ENCODE measurements at regions of chr7 and their contacts with region 1.

Region 1: GRCh38 chr7:121395961-121396757 is at the start of gene FAM3C:
- DNase-seq: peak; percentile 83
- H3K4me3 Mint-ChIP-seq: peak within 1 kb of the TSS; percentile 82
- H3K27ac Mint-ChIP-seq: peak within 1 kb of the TSS; percentile 77
- H3K4me1 Mint-ChIP-seq: peaks cover 42% of the 10 kb centered on the region
- H3K27me3 Mint-ChIP-seq: no peaks in the 10 kb centered on the region
- total RNA-seq, gene FAM3C: 40.7 to 41.0 TPM

Region 2: GRCh38 chr7:121273467-121274167 is 122.5 kb before region 1 on chr7:
- CTCF ChIA-PET with region 1: no interaction called
- POLR2A ChIA-PET with region 1: no interaction called
- DNase-seq: no peak
- H3K4me3 Mint-ChIP-seq: no peak overlapping the region
- H3K27ac Mint-ChIP-seq: no peak overlapping the region
- H3K4me1 Mint-ChIP-seq: peaks cover 2% of the 10 kb centered on the region
- H3K27me3 Mint-ChIP-seq: peaks cover 33% of the 10 kb centered on the region

Region 3: GRCh38 chr7:121302214-121302745 is 93.9 kb before region 1 on chr7:
- CTCF ChIA-PET with region 1: no interaction called
- POLR2A ChIA-PET with region 1: no interaction called
- DNase-seq: no peak
- H3K4me3 Mint-ChIP-seq: no peak overlapping the region
- H3K27ac Mint-ChIP-seq: no peak overlapping the region
- H3K4me1 Mint-ChIP-seq: no peaks in the 10 kb centered on the region
- H3K27me3 Mint-ChIP-seq: peaks cover 11% of the 10 kb centered on the region

Region 4: DNA sequence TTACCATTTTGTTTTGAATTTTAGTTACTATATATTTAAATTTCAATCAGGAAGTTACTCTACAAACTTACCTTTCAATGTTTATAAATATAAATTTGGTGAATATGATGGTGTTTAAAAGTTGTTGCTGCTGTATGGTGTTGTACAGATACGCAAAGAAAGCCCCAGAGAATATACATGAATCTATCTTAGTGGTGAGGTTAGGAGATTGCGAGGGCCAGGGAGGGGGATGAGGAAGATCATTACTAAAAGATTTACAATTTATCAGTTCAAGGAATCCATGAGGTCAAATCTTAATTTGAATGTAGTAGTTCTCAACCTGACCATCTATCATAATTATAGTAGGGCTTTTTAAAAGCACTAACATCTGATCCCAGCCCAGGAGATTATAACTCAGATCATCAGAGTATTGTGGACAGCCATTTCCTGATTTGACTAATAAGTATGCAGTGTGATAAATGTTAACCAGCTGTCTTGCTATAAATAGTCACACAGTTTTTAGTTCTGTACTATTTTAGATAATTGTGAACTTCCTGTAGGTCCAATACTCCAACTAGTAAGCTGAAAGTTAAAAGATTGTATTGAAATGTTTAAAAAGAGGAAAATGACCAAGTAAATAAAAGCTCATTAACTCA is 23.7 kb before region 1 on chr7:
- CTCF ChIA-PET with region 1: interaction called, 76 read pairs
- POLR2A ChIA-PET with region 1: interaction called, 22 read pairs
- DNase-seq: no peak
- H3K4me3 Mint-ChIP-seq: peak overlapping the region; percentile 46
- H3K27ac Mint-ChIP-seq: peak overlapping the region; percentile 84
- H3K4me1 Mint-ChIP-seq: peaks cover 56% of the 10 kb centered on the region
- H3K27me3 Mint-ChIP-seq: no peaks in the 10 kb centered on the region

Region 5: GRCh38 chr7:121385800-121386179 is 10.4 kb before region 1 on chr7:
- CTCF ChIA-PET with region 1: interaction called, 32 read pairs
- POLR2A ChIA-PET with region 1: interaction called, 13 read pairs
- DNase-seq: no peak
- H3K4me3 Mint-ChIP-seq: no peak overlapping the region
- H3K27ac Mint-ChIP-seq: no peak overlapping the region
- H3K4me1 Mint-ChIP-seq: peaks cover 53% of the 10 kb centered on the region
- H3K27me3 Mint-ChIP-seq: no peaks in the 10 kb centered on the region

Region 6: GRCh38 chr7:121437456-121438127 is 41.4 kb after region 1 on chr7:
- CTCF ChIA-PET with region 1: interaction called, 18 read pairs
- POLR2A ChIA-PET with region 1: interaction called, 14 read pairs
- DNase-seq: no peak
- H3K4me3 Mint-ChIP-seq: no peak overlapping the region
- H3K27ac Mint-ChIP-seq: peak overlapping the region; percentile 86
- H3K4me1 Mint-ChIP-seq: peaks cover 48% of the 10 kb centered on the region
- H3K27me3 Mint-ChIP-seq: no peaks in the 10 kb centered on the region

Region 7: DNA sequence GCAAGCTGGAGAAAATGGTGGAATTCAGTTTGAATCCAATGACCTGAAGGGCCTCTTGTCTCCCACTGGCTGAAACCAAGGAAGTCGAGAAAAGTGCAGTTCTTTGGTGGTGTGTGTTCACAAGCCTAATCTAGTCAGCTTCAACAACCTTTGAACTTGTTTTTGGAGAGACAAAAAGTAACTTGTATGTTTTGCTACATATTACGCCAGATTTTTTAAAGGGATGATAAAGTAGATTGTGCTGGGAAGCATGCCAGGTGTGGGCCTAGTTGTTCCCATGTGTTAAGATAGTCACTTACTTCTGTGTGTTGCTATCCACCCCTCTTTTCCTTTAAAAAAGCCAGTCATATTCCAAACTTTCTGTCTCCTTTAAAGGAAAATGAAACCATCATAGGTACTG is 79.6 kb after region 1 on chr7:
- CTCF ChIA-PET with region 1: no interaction called
- POLR2A ChIA-PET with region 1: no interaction called
- DNase-seq: no peak
- H3K4me3 Mint-ChIP-seq: no peak overlapping the region
- H3K27ac Mint-ChIP-seq: no peak overlapping the region
- H3K4me1 Mint-ChIP-seq: no peaks in the 10 kb centered on the region
- H3K27me3 Mint-ChIP-seq: peaks cover 3% of the 10 kb centered on the region

Region 8: GRCh38 chr7:121530227-121531174 is 134.3 kb after region 1 on chr7:
- CTCF ChIA-PET with region 1: interaction called, 18 read pairs
- POLR2A ChIA-PET with region 1: interaction called, 33 read pairs
- DNase-seq: peak; percentile 83
- H3K4me3 Mint-ChIP-seq: peak overlapping the region; percentile 31
- H3K27ac Mint-ChIP-seq: peak overlapping the region; percentile 93
- H3K4me1 Mint-ChIP-seq: peaks cover 47% of the 10 kb centered on the region
- H3K27me3 Mint-ChIP-seq: no peaks in the 10 kb centered on the region